ENCODE measurements at regions of chr3 and their contacts with region 1.

Region 1: GRCh38 chr3:57555738-57556458 is at the start of gene PDE12:
- DNase-seq: peak; percentile 76 to 90 (median 88)
- H3K4me3 ChIP-seq: peak within 1 kb of the TSS; percentile 63 to 100 (median 94)
- H3K27ac ChIP-seq: peak within 1 kb of the TSS; percentile 36 to 99 (median 93)
- H3K27me3 ChIP-seq: no peaks in the 10 kb centered on the region
- CTCF ChIP-seq: peak in 27 of 56 donors; percentile 2 to 44 (median 27)
- total RNA-seq, gene PDE12: 17.3 to 29.8 (median 22.0) TPM

Region 2: DNA sequence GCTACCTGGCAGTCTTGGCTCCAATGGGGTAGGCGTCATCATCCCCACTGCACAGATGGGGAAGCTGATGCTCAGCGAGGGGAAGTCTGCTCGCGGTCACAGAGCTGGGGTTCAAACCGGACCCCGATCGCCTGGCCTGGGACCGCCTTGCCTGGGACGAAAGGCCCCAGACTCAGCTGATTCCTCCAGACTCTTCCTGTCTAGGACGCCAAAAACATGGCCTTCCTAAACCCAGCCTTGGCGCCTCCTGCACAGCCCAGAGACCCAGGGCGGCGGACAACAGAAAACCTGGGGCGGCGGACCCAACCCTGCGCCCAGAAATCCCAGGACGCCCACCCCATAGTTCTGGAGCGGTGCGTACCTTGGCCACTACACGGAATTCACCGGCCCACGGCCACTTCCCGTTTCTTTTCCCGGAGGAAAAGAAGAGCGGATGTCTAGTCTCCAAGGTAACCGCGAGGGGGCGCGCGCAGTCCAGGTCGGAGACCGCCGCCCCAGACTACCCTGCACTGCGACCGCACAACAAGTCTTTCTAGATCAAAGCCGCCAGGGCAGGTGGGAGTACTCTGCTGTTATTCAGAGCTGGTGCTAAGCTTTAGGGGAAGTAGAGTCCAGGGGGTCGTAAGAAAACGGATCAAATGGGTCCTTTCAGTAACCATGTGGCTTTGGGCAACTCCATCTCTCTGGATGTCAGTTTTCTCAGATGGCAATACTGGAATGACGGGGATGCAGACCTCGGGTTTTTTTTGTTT is 385.9 kb before region 1 on chr3:
- intact Hi-C with region 1: loop called in 1 of 2 experiments (anchors 10 kb)
- DNase-seq: peak in 9 of 10 donors; percentile 44 to 79 (median 64)
- H3K4me3 ChIP-seq: peak overlapping the region; percentile 23 to 69 (median 51)
- H3K27ac ChIP-seq: peak overlapping the region in 3 of 59 donors; percentile 8 to 52 (median 17)
- H3K27me3 ChIP-seq: peaks cover 0 to 12% (median 0%) of the 10 kb centered on the region in 45 donors
- CTCF ChIP-seq: peak; percentile 66 to 90 (median 84)

Region 3: GRCh38 chr3:57227204-57227929 is 328.5 kb before region 1 on chr3 and contains the start of gene APPL1:
- intact Hi-C with region 1: loop called in 1 of 2 experiments (anchors 5 kb)
- DNase-seq: peak; percentile 83 to 98 (median 90)
- H3K4me3 ChIP-seq: peak within 1 kb of the TSS; percentile 71 to 97 (median 84)
- H3K27ac ChIP-seq: peak within 1 kb of the TSS; percentile 20 to 97 (median 89)
- H3K27me3 ChIP-seq: no peaks in the 10 kb centered on the region
- CTCF ChIP-seq: peak in 20 of 56 donors; percentile 3 to 56 (median 23)
- total RNA-seq, gene APPL1: 40.9 to 68.5 (median 56.2) TPM

Region 4: DNA sequence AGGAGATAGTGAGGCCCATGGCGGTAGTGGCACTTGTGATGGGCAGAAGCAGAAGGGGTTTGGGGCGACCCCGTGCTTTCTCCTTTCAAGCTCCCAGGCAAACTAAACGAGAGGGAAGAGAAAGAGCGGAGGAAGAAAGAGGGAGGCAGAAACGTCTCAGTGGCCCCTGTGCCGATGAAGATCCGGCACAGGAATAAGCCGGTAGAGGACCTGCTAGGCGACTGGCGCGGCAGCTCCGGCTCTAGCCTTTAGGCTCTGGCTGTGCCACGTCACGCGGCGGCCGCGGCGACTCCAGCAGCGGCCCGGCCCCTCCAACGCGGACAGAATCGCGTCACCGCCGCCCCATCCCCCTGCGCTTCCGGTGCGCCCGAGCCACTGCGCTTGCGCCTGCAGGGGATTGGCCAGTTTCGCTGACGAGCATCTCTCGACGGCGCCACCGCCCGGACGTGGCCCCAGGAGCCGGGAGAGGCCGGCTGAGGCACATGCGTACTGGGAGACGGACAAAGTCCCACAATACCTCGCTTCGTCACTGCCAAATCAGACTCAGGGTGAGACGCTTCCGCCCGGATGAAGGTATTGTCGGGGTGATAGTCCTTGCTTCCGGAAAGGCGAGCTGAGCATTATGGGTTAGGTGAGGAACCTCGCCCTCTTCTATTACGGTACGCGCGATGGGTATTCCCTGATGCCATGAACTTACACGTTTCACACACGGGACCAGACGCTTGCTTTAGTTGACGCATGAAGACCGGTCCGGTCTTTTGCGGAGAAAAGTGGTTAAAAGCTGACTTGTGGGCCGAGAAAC is 41.4 kb after region 1 on chr3 and contains the start of gene ARF4:
- intact Hi-C with region 1: loop called (anchors 1 to 2 kb)
- DNase-seq: peak; percentile 96 to 99 (median 98)
- H3K4me3 ChIP-seq: peak within 1 kb of the TSS; percentile 51 to 99 (median 89)
- H3K27ac ChIP-seq: peak within 1 kb of the TSS; percentile 80 to 99 (median 95)
- H3K27me3 ChIP-seq: no peaks in the 10 kb centered on the region
- CTCF ChIP-seq: peak in 55 of 56 donors; percentile 23 to 77 (median 56)
- total RNA-seq, gene ARF4: 45.6 to 76.9 (median 61.0) TPM

Region 5: DNA sequence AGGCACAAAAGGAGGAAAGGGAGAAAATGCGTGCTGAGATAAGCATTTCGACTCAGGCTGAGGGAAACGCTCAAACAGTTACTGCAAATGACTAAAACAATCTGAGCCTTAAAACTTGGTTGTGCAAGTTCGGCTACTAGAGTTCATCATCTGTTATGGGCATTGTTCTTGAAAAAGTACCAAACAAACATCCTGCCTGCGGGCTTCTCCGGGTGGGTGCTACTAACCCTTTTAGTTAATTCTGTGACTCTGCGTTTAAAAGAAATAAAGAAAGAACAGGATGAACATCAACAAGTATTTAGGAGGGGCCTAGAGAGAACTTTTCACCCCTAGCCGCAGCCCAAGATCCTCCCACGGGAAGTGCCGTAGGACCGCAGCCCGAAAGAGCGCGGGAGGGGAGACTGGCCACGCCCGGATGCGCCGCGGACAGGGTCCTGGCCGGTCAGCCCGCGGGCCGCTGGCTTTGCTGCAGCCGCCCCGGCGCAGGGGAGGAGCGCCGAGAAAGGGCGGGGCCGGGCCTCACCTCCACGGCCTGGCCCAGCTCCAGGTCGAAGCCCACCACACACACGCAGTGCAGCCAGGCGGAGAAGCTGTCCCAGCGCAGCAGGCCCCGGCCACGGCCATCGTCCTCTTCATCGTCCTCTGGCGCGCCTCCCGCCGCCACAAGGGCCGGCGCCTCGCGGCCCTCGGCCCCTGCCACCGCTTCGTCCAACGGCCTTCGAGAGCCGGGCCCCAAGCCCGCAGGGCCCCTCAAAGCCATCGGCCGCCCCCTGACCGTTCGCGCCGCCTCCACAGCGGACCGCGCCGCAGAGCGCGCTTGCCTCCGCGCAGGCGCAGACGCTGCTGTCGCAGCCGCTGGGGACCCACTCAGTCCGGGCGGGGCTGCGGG is 136.6 kb after region 1 on chr3 and contains the start of gene DENND6A:
- intact Hi-C with region 1: loop called (anchors 2 to 5 kb)
- DNase-seq: peak; percentile 23 to 97 (median 95)
- H3K4me3 ChIP-seq: peak within 1 kb of the TSS; percentile 57 to 100 (median 95)
- H3K27ac ChIP-seq: peak within 1 kb of the TSS; percentile 70 to 99 (median 97)
- H3K27me3 ChIP-seq: no peaks in the 10 kb centered on the region
- CTCF ChIP-seq: peak in 23 of 56 donors; percentile 1 to 59 (median 26)
- total RNA-seq, gene DENND6A: 13.1 to 41.8 (median 28.0) TPM

Region 6: DNA sequence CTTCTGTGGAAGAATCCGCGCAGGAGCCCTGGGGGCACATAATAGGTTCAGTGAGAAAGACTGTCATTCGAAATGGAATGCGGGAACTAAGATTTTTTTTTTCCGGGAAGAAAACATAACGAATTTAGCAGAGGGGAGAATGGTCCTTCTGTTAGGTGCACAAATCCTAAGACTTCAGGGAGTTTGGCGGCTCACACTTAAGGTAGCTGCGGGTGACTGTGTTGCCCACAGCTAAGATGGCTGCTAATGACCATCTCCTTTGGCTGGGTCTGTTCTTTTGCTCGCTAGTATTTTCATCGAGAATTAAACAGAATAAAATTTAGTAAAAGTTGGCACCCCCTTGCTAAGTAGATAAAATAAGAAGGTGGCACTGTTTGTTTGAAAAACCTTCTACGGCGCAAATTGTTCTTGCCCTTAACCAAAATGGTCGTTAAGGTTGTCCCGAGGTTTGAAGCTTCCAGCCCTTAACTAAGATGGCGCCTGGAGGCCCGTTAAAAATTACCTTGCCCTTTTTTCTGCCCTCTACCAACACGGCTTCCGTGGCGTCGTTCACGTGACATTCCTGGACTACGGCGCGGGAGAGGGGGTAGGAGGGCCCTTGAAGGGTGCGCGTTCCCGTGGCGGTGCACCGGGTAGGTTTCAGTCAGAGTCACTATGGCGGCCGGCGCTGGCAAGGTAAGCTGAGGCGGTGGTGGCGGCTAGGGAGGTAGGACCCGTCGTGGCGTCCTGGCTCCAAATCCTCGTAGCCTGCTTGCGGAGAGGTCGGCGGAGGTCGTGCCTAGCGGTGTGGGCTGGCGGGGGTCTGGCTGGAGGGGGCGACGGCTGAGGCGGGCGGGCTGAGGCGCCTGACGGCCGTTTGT is 200.0 kb after region 1 on chr3 and contains the start of gene SLMAP:
- intact Hi-C with region 1: loop called (anchors 5 to 10 kb)
- DNase-seq: peak; percentile 94 to 98 (median 97)
- H3K4me3 ChIP-seq: peak within 1 kb of the TSS; percentile 61 to 98 (median 89)
- H3K27ac ChIP-seq: peak within 1 kb of the TSS; percentile 60 to 98 (median 92)
- H3K27me3 ChIP-seq: no peaks in the 10 kb centered on the region
- CTCF ChIP-seq: peak in 18 of 56 donors; percentile 7 to 49 (median 28)
- total RNA-seq, gene SLMAP: 48.2 to 101 (median 69.5) TPM